Calu3 (cell line): ENCODE measurements at regions of chr7 and their contacts with region 1.

Region 1: DNA sequence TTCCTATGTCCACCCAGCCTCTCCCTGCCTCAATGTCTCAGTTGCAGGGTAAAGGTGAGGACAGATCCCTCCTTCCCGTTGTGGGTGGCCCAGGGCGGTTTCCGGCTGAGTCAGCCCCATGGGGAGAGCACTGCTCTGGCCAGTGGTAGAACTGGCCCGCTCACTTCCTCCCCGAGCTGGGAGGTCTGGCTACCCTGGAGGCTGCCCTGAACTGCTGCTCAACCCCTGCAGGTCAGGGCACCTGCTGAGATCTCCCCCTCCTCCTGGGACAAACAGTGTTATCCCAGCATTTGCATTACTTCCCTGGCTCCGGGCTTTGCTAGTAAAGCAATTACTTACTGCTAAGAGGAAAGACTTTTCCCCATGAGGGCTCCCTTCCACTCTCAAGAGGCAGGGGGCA is 21.4 kb upstream of the IMPDH1 start:
- DNase-seq: peak; percentile 59
- H3K4me3 Mint-ChIP-seq: no peak overlapping the region
- H3K27ac Mint-ChIP-seq: no peak overlapping the region
- H3K4me1 Mint-ChIP-seq: peaks cover 8% of the 10 kb centered on the region
- H3K27me3 Mint-ChIP-seq: no peaks in the 10 kb centered on the region
- CTCF ChIP-seq: no peak

Region 2: GRCh38 chr7:128455551-128456254 is 24.5 kb after region 1 on chr7 and contains the start of gene HILPDA:
- CTCF ChIA-PET with region 1: interaction called, 63 read pairs
- intact Hi-C with region 1: loop called (anchors 1 kb)
- DNase-seq: peak; percentile 90
- H3K4me3 Mint-ChIP-seq: peak within 1 kb of the TSS; percentile 95
- H3K27ac Mint-ChIP-seq: peak within 1 kb of the TSS; percentile 78
- H3K4me1 Mint-ChIP-seq: peaks cover 41% of the 10 kb centered on the region
- H3K27me3 Mint-ChIP-seq: peaks cover 14% of the 10 kb centered on the region
- CTCF ChIP-seq: no peak
- total RNA-seq, gene HILPDA: 14.5 and 17.4 TPM in 2 replicates